Gastrocnemius medialis (tissue), 4 donors: ENCODE measurements at regions of chr4 and their contacts with region 1.

Region 1: DNA sequence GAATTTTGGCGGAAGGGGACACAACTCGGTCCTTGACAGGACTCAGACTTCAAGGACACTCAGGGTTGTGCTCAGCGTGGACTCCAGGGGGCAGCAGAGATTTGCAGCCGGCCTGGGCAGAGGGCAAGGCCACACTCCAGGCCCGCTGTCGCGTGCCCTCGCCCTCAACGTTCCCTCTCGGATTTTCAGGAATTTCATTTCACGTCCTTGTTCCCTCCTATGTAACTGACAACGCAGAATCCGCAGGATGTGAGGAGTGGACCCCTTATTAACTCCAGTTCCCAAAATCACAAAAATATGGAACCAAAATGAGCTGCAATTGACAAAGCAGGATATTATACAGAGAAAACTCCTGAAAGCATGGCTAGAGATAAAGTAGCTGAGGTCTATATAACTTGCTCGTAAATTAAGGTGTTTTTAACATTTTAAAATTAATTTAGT is 21.0 kb upstream of the DCTD start:
- DNase-seq: peak; percentile 15 to 28
- ATAC-seq: peak; percentile 69 to 75
- H3K4me3 ChIP-seq: no peak overlapping the region
- H3K27ac ChIP-seq: no peak overlapping the region
- H3K4me1 ChIP-seq: no peaks in the 10 kb centered on the region
- H3K27me3 ChIP-seq: peaks cover 0 to 3% (median 0%) of the 10 kb centered on the region in 3 donors
- CTCF ChIP-seq: peak; percentile 30 to 80 (median 69)
- POLR2A ChIP-seq: no peak

Region 2: DNA sequence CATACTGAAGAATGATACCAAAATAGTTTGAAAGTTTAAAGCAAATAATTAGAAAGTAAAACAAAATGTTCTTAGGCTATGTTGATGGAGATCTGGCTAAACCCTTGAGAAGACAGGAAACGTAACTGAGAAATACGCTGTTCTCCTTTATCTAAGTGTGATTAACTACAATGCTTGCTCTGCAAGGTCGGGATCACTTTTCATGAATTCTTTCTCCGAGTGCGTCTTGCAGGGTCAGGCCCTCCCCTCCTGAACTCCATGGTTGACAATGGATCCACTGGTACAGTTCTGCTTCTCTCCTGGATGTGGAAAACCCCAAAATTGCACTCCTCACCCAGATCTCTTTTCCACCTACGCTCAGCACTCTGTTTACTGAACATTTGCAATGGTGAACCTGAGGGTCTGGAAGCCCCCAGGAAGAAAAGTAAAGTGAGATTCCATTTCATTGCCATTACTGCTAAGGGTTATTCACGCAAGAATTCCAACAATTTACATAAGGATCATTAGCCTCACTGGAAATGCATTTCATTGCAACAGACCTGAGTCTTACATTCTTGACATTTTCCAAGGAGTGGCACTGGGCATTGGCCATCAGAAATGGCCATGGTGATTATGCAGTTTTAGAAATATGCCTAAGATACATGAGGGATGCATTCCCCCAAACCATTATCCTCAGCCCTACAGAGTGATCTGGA is 136.2 kb after region 1 on chr4:
- in situ Hi-C with region 1: loop called in 1 of 4 experiments (anchors 10 kb)
- intact Hi-C with region 1: loop called (anchors 2 kb)
- DNase-seq: no peak
- ATAC-seq: no peak
- H3K4me3 ChIP-seq: no peak overlapping the region
- H3K27ac ChIP-seq: no peak overlapping the region
- H3K4me1 ChIP-seq: no peaks in the 10 kb centered on the region
- H3K27me3 ChIP-seq: no peaks in the 10 kb centered on the region
- CTCF ChIP-seq: no peak
- POLR2A ChIP-seq: no peak

Region 3: GRCh38 chr4:183256756-183257385 is 318.6 kb after region 1 on chr4:
- in situ Hi-C with region 1: loop called (anchors 10 to 25 kb)
- intact Hi-C with region 1: loop called (anchors 1 kb)
- DNase-seq: peak in 1 of 2 donors; percentile 10
- ATAC-seq: no peak
- H3K4me3 ChIP-seq: no peak overlapping the region
- H3K27ac ChIP-seq: no peak overlapping the region
- H3K4me1 ChIP-seq: no peaks in the 10 kb centered on the region
- H3K27me3 ChIP-seq: no peaks in the 10 kb centered on the region
- CTCF ChIP-seq: peak in 4 of 5 experiments; percentile 2 to 70 (median 66)
- POLR2A ChIP-seq: no peak

Region 4: GRCh38 chr4:183261953-183262775 is 323.9 kb after region 1 on chr4:
- in situ Hi-C with region 1: loop called (anchors 10 to 25 kb)
- intact Hi-C with region 1: loop called (anchors 1 kb)
- DNase-seq: peak; percentile 35 to 67
- ATAC-seq: peak; percentile 86 to 88
- H3K4me3 ChIP-seq: no peak overlapping the region
- H3K27ac ChIP-seq: peak overlapping the region in 3 of 4 donors; percentile 4 to 59 (median 42)
- H3K4me1 ChIP-seq: peaks cover 0 to 4% of the 10 kb centered on the region in 2 donors
- H3K27me3 ChIP-seq: no peaks in the 10 kb centered on the region
- CTCF ChIP-seq: peak; percentile 66 to 80 (median 73)
- POLR2A ChIP-seq: no peak

Region 5: GRCh38 chr4:183407128-183407585 is 468.9 kb after region 1 on chr4:
- in situ Hi-C with region 1: loop called in 1 of 4 experiments (anchors 25 kb)
- intact Hi-C with region 1: no loop called
- DNase-seq: peak; percentile 42 to 56
- ATAC-seq: peak; percentile 93 to 96
- H3K4me3 ChIP-seq: peak overlapping the region; percentile 49 to 56 (median 52)
- H3K27ac ChIP-seq: peak overlapping the region in 1 of 4 donors; percentile 15
- H3K4me1 ChIP-seq: no peaks in the 10 kb centered on the region
- H3K27me3 ChIP-seq: no peaks in the 10 kb centered on the region
- CTCF ChIP-seq: peak; percentile 65 to 95 (median 85)
- POLR2A ChIP-seq: no peak